ENCODE measurements at regions of chr1 and their contacts with region 1.

Region 1: DNA sequence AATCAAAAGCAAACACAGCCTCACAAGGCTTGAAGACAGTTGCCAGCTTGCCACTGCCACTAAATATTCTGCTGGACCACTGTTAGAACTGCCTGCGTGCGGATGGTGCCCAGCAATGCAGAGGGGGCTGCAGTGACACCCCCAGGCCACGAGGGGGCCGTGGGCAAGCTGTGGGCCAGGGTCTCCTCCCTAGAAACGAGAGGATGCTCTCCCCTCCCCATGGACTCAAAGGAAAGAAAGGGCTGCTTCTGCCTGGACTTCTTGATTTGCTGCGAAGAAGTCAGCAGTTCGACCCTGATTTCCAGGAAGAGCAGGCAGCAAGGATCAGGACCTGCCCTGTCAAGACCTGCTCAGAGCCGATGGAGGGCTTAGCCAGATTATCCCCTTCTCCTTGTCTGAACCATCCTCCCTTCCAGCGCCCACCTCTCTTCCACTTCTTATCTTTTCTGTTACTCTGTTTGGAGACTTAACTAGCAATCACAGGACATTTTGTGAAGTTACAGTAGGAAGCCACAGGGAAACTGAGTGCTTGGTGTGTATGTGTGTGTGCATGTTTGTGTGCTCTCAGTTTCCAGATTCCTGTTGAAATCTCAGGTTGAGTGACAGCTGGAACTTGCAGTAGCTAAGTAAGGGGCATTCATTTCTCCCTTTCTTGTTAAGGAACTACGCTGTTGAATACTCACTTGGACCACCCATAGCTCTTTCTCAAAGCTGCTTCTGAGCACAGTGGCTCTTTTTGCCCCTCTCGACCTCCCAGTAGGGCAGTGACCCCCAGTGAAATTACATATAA is 2.7 kb downstream of the MAN1C1 start:
- DNase-seq: peak; percentile 41 to 87
- H3K4me3 ChIP-seq: no peak overlapping the region
- H3K27ac ChIP-seq: no peak overlapping the region
- H3K4me1 ChIP-seq: peaks cover 0 to 25% (median 6%) of the 10 kb centered on the region in 4 experiments; a peak in 6 of 7 replicates
- H3K27me3 ChIP-seq: peaks cover 9 to 29% (median 17%) of the 10 kb centered on the region in 4 experiments
- CTCF ChIP-seq: peak; percentile 94 to 99 (median 99)
- EP300 ChIP-seq: no peak
- POLR2A ChIP-seq: no peak
- RAD21 ChIP-seq: peak; percentile 83 to 87

Region 2: DNA sequence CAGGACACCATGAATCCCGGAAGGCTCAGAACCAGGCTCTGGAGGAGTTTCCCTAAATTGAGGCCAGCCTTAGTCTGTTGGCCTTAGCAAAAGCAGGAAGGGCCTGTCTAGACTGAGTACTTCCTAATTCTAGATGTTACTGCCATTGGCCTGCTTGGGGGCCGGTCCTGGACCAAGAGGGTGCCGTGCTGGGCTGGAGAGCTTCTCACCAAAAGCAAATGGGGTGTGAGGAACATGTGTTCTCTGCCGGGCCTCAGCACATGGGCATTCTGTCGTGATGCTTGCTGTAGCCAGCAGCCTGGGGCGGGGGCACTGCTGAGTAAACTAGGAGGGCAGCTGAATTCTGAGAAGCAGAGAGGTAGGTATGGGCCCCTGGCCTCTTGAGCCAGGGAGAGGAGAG is 38.4 kb before region 1 on chr1:
- CTCF ChIA-PET with region 1: interaction called, 15 read pairs
- POLR2A ChIA-PET with region 1: no interaction called
- DNase-seq: no peak
- H3K4me3 ChIP-seq: no peak overlapping the region
- H3K27ac ChIP-seq: no peak overlapping the region
- H3K4me1 ChIP-seq: peaks cover 0 to 13% (median 10%) of the 10 kb centered on the region in 4 experiments; a peak in 5 of 7 replicates
- H3K27me3 ChIP-seq: no peaks in the 10 kb centered on the region; a peak in 2 of 7 replicates
- CTCF ChIP-seq: peak in 2 of 3 experiments; percentile 27 to 38; a peak in 2 of 4 replicates
- EP300 ChIP-seq: no peak
- POLR2A ChIP-seq: no peak
- RAD21 ChIP-seq: peak; percentile 12 to 33; a peak in 2 of 4 replicates

Region 3: DNA sequence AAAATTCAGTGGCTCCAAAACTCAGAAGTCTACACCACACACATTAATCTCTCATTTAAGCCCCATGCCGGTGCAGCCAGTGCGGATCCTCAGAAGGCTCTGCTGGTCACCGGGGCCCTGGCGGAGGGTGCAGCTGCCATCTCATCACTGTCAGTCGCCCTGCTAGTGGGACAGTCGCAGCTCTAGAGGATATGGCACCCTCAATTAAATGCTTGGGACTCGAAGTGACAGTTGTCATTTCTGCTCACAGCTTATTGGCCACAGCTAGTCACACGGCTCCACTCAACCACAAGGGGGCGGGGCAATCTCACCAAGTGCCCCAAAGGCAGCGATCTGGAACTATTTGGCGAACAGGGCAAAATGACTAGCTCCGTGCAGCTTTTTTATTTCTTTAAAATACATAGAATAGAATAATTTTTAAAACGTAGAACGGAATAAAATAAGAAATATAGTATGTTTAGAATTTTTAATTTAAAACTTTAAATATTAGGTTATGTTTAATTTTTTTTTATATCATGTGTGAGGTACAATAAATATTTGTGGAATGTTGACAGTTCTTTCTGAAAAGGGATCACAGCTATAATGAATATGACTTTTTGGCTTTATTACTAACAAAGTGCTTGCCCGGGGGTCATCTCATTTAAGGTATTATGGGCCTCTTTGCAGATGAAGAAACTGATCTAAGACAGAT is 10.7 kb before region 1 on chr1:
- CTCF ChIA-PET with region 1: interaction called, 10 read pairs
- POLR2A ChIA-PET with region 1: no interaction called
- DNase-seq: peak in 1 of 2 experiments; percentile 87
- H3K4me3 ChIP-seq: no peak overlapping the region
- H3K27ac ChIP-seq: no peak overlapping the region
- H3K4me1 ChIP-seq: no peaks in the 10 kb centered on the region
- H3K27me3 ChIP-seq: no peaks in the 10 kb centered on the region; a peak in 2 of 7 replicates
- CTCF ChIP-seq: peak; percentile 63 to 69 (median 65)
- EP300 ChIP-seq: no peak
- POLR2A ChIP-seq: no peak
- RAD21 ChIP-seq: peak; percentile 72 to 81

Region 4: DNA sequence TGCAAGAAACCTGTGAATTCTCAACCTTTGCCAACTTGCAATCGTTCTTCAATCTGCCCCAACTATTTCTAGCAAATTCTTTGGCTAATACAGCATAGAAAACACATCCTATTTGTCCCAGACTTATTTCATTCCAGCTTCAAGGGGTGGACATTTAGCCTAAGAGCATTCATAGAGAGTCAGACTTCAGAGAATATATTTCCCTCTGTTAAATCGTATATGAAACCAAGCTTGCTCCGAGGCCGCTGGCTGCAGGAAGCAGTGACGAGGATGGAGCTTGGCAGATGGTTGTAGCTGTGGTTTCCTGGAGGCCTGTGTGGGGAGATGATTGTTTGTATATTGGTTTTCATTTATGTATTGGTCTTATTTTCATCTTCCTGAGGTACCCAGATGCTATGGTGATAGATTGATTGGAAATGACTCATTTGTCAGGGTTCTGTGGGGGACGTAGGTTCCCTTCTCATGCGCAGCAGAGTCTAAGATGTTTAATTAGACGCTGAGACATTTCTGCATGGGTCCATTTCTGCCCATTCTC is 23.3 kb after region 1 on chr1:
- CTCF ChIA-PET with region 1: interaction called, 16 read pairs
- POLR2A ChIA-PET with region 1: interaction called, 4 read pairs
- DNase-seq: peak in 1 of 2 experiments; percentile 10
- H3K4me3 ChIP-seq: no peak overlapping the region
- H3K27ac ChIP-seq: no peak overlapping the region
- H3K4me1 ChIP-seq: peaks cover 0 to 4% (median under 1%) of the 10 kb centered on the region in 4 experiments; a peak in 2 of 7 replicates
- H3K27me3 ChIP-seq: no peaks in the 10 kb centered on the region; a peak in 2 of 7 replicates
- CTCF ChIP-seq: no peak
- EP300 ChIP-seq: no peak
- POLR2A ChIP-seq: no peak
- RAD21 ChIP-seq: no peak

Region 5: GRCh38 chr1:25666505-25666904 is 47.2 kb after region 1 on chr1:
- CTCF ChIA-PET with region 1: interaction called, 14 read pairs
- POLR2A ChIA-PET with region 1: no interaction called
- DNase-seq: no peak
- H3K4me3 ChIP-seq: no peak overlapping the region
- H3K27ac ChIP-seq: no peak overlapping the region
- H3K4me1 ChIP-seq: peaks cover 0 to 10% (median 2%) of the 10 kb centered on the region in 4 experiments; a peak in 5 of 7 replicates
- H3K27me3 ChIP-seq: no peaks in the 10 kb centered on the region
- CTCF ChIP-seq: no peak
- EP300 ChIP-seq: no peak
- POLR2A ChIP-seq: no peak
- RAD21 ChIP-seq: no peak

Region 6: DNA sequence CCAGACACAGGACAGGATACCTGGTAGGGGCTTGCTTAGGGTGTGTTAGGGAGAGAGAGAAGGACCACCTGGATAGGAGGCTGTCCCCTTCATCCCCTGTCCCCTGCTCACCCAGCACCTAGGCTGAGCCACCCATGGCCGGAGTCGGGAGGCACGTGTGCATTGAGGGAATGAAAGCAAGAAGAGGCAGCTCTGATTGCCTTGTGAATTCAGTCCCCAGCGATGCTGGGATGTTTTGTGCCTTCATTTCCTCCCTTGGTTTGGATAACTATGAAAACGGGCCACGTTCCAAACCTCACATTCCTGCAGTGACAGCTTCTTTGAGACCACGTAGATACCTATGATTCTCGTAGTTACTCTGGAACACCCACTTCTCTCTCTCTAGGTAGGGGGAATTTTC is 64.4 kb after region 1 on chr1:
- CTCF ChIA-PET with region 1: interaction called, 11 read pairs
- POLR2A ChIA-PET with region 1: no interaction called
- DNase-seq: no peak
- H3K4me3 ChIP-seq: no peak overlapping the region
- H3K27ac ChIP-seq: no peak overlapping the region
- H3K4me1 ChIP-seq: no peaks in the 10 kb centered on the region
- H3K27me3 ChIP-seq: no peaks in the 10 kb centered on the region; a peak in 1 of 7 replicates
- CTCF ChIP-seq: no peak
- EP300 ChIP-seq: no peak
- POLR2A ChIP-seq: no peak
- RAD21 ChIP-seq: no peak

Region 7: GRCh38 chr1:25810341-25811299 is 191.3 kb after region 1 on chr1:
- CTCF ChIA-PET with region 1: interaction called, 12 read pairs
- POLR2A ChIA-PET with region 1: interaction called, 3 read pairs
- DNase-seq: peak; percentile 59 to 100
- H3K4me3 ChIP-seq: no peak overlapping the region
- H3K27ac ChIP-seq: no peak overlapping the region
- H3K4me1 ChIP-seq: peaks cover 0 to 5% (median under 1%) of the 10 kb centered on the region in 4 experiments; a peak in 2 of 7 replicates
- H3K27me3 ChIP-seq: no peaks in the 10 kb centered on the region
- CTCF ChIP-seq: peak; percentile 98 to 100 (median 99)
- EP300 ChIP-seq: no peak
- POLR2A ChIP-seq: no peak
- RAD21 ChIP-seq: peak; percentile 99 to 100

Measured in H1 (cell line).